Caco-2 (cell line): ENCODE measurements at regions of chr4 and their contacts with region 1.

Region 1: GRCh38 chr4:139603576-139604387 is 47.8 kb upstream of the SETD7 start:
- DNase-seq: peak; percentile 67 to 77
- H3K4me3 ChIP-seq: no peak overlapping the region
- H3K4me3 Mint-ChIP-seq: no peak overlapping the region
- H3K27ac Mint-ChIP-seq: no peak overlapping the region
- H3K4me1 ChIP-seq: peaks cover 34% of the 10 kb centered on the region; the same call in 1 of the 2 replicates
- H3K4me1 Mint-ChIP-seq: peaks cover 37% of the 10 kb centered on the region
- H3K27me3 ChIP-seq: no peaks in the 10 kb centered on the region
- H3K27me3 Mint-ChIP-seq: no peaks in the 10 kb centered on the region
- CTCF ChIP-seq: peak; percentile 64 to 71

Region 2: DNA sequence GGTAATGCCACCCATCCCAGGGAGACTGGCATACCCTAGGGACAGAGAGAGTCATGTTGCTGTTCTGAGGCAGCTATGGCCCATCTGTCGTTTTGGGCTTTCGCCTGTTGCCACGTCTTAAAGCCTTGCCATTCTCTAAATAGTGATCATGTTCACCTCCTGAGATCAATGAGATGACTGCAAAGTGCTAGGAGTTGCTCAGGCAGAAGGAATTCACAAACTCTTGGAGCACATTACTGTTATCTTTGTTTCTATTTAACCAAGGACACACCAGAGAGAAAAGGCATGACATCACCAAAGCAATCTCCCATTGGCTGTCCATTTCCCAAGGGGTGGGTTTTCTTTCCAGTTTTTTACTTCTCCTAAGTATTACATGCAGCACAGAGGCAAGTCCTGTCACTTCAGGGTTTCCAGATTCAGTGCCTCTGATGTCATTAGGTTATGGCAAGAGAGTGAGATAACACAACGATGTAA is 10.7 kb before region 1 on chr4:
- CTCF ChIA-PET with region 1: no interaction called
- POLR2A ChIA-PET with region 1: no interaction called
- intact Hi-C with region 1: no loop called
- DNase-seq: peak; percentile 62 to 68
- H3K4me3 ChIP-seq: no peak overlapping the region
- H3K4me3 Mint-ChIP-seq: peak overlapping the region; percentile 39
- H3K27ac Mint-ChIP-seq: peak overlapping the region; percentile 83
- H3K4me1 ChIP-seq: peaks cover 17% of the 10 kb centered on the region; the same call in 1 of the 2 replicates
- H3K4me1 Mint-ChIP-seq: peaks cover 29% of the 10 kb centered on the region
- H3K27me3 ChIP-seq: no peaks in the 10 kb centered on the region
- H3K27me3 Mint-ChIP-seq: no peaks in the 10 kb centered on the region
- CTCF ChIP-seq: no peak

Region 3: GRCh38 chr4:139625482-139625881 is 21.7 kb after region 1 on chr4:
- CTCF ChIA-PET with region 1: no interaction called
- POLR2A ChIA-PET with region 1: no interaction called
- intact Hi-C with region 1: loop called (anchors 2 kb)
- DNase-seq: no peak
- H3K4me3 ChIP-seq: no peak overlapping the region
- H3K4me3 Mint-ChIP-seq: no peak overlapping the region
- H3K27ac Mint-ChIP-seq: peak overlapping the region; percentile 88
- H3K4me1 ChIP-seq: peaks cover 32% of the 10 kb centered on the region
- H3K4me1 Mint-ChIP-seq: peaks cover 30% of the 10 kb centered on the region
- H3K27me3 ChIP-seq: no peaks in the 10 kb centered on the region
- H3K27me3 Mint-ChIP-seq: no peaks in the 10 kb centered on the region
- CTCF ChIP-seq: no peak

Region 4: GRCh38 chr4:139682741-139683151 is 79.0 kb after region 1 on chr4:
- CTCF ChIA-PET with region 1: no interaction called
- POLR2A ChIA-PET with region 1: no interaction called
- intact Hi-C with region 1: no loop called
- DNase-seq: no peak
- H3K4me3 ChIP-seq: no peak overlapping the region
- H3K4me3 Mint-ChIP-seq: no peak overlapping the region
- H3K27ac Mint-ChIP-seq: peak overlapping the region; percentile 65
- H3K4me1 ChIP-seq: peaks cover 48% of the 10 kb centered on the region
- H3K4me1 Mint-ChIP-seq: peaks cover 63% of the 10 kb centered on the region
- H3K27me3 ChIP-seq: no peaks in the 10 kb centered on the region
- H3K27me3 Mint-ChIP-seq: no peaks in the 10 kb centered on the region
- CTCF ChIP-seq: no peak

Region 5: GRCh38 chr4:140237606-140237986 is 633.8 kb after region 1 on chr4:
- CTCF ChIA-PET with region 1: no interaction called
- POLR2A ChIA-PET with region 1: no interaction called
- intact Hi-C with region 1: no loop called
- DNase-seq: no peak
- H3K4me3 ChIP-seq: no peak overlapping the region
- H3K4me3 Mint-ChIP-seq: no peak overlapping the region
- H3K27ac Mint-ChIP-seq: no peak overlapping the region
- H3K4me1 ChIP-seq: peaks cover 7% of the 10 kb centered on the region; the same call in 1 of the 2 replicates
- H3K4me1 Mint-ChIP-seq: peaks cover 12% of the 10 kb centered on the region
- H3K27me3 ChIP-seq: no peaks in the 10 kb centered on the region
- H3K27me3 Mint-ChIP-seq: no peaks in the 10 kb centered on the region
- CTCF ChIP-seq: no peak